ENCODE measurements at regions of chr2 and their contacts with region 1.

Region 1: GRCh38 chr2:102193074-102193473 is 6.3 kb downstream of the IL1RL2 start:
- DNase-seq: peak in 1 of 2 experiments; percentile 65
- H3K4me3 ChIP-seq: no peak overlapping the region
- H3K27ac ChIP-seq: peak overlapping the region; percentile 8; the same call in 1 of the 2 replicates
- H3K4me1 ChIP-seq: peaks cover 23% of the 10 kb centered on the region
- H3K27me3 ChIP-seq: no peaks in the 10 kb centered on the region
- CTCF ChIP-seq: no peak

Region 2: DNA sequence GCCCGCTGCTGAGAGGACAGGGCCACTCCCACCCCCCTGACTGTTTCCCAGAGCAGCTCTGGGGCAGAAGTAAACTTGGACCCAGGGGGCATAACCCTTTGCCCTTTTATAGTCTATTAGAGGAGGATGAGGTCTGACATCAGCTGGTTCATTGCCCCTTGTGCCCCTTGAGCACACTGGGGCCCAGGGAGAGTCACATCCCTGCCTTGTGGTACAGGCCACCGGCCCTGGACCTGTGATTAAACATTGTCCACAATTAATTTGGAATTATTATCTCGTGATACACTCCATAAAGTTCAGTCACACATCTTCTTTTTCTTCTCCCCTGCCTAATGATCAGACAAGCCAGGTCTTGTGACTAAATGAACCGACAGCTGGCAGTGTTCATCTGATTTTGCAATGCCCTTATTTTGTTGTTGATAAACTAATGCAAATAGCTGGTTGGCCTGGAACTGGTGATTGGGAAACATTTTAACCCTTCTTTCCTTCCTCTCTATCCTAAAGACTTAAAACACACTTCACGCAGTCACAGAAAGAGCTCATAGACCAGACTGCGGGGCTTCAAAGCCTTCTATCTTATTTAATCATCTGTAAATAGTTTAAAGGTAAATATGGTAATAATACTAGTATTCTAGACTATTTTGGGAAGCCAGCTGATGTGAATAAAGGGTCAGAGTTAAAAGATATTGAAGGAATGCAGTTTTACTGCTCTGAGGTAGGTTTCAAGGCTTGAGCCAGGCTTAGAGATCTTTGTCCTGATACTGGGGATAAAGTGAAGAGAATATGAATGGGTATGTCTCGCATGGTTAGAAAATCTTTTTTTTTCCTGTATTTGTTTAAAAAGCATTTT is 37.2 kb before region 1 on chr2:
- CTCF ChIA-PET with region 1: no interaction called
- POLR2A ChIA-PET with region 1: no interaction called
- intact Hi-C with region 1: loop called (anchors 1 kb)
- DNase-seq: peak in 1 of 2 experiments; percentile 96
- H3K4me3 ChIP-seq: no peak overlapping the region
- H3K27ac ChIP-seq: peak overlapping the region; percentile 64
- H3K4me1 ChIP-seq: peaks cover 45% of the 10 kb centered on the region
- H3K27me3 ChIP-seq: no peaks in the 10 kb centered on the region
- CTCF ChIP-seq: no peak